KBM-7 (cell line): ENCODE measurements at regions of chr6 and their contacts with region 1.

Region 1: GRCh38 chr6:70706491-70707123 is 38.9 kb downstream of the SMAP1 start:
- DNase-seq: peak; percentile 64

Region 2: GRCh38 chr6:70599187-70599586 is 107.4 kb before region 1 on chr6:
- in situ Hi-C with region 1: no loop called
- DNase-seq: no peak

Region 3: GRCh38 chr6:70884074-70884983 is 177.7 kb after region 1 on chr6:
- in situ Hi-C with region 1: loop called (anchors 25 kb)
- DNase-seq: peak; percentile 74

Region 4: DNA sequence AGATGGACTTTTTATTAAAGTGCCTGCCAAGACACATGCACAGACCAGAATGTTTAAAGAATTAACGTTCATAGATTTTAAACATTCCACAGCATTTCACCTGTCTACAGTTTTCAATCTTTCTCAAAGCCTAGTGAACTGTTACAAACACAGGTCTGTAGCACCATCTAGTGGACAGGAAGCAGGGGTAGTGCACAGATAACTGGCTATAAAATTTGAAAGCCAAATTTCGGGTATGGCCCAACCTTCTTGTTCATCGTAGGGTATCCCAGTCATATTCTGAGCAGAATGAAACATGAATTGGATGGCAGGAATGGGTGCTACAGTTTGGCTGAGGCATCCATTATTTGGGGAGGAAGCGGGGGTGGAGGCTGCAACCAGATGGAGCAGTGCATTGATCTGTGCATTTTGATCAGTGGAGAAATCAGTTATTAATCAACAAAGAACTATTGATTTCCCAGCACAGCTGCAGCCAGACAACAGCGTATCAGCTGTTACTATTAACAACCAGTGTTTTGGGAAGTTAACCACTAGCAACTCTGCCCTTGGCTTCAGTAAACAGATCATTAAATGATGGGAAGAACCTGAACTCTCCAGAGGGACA is 306.4 kb after region 1 on chr6:
- in situ Hi-C with region 1: loop called (anchors 25 kb)
- DNase-seq: peak; percentile 37